Left ventricle myocardium inferior (tissue), 1 donor: ENCODE measurements at regions of chr1 and their contacts with region 1.

Region 1: GRCh38 chr1:29793101-29793546 is 556.8 kb downstream of the PTPRU start:
- DNase-seq: peak; percentile 68
- H3K4me3 ChIP-seq: no peak overlapping the region
- H3K27ac ChIP-seq: no peak overlapping the region
- H3K4me1 ChIP-seq: no peaks in the 10 kb centered on the region
- H3K27me3 ChIP-seq: peaks cover 52% of the 10 kb centered on the region
- CTCF ChIP-seq: peak; percentile 87

Region 2: DNA sequence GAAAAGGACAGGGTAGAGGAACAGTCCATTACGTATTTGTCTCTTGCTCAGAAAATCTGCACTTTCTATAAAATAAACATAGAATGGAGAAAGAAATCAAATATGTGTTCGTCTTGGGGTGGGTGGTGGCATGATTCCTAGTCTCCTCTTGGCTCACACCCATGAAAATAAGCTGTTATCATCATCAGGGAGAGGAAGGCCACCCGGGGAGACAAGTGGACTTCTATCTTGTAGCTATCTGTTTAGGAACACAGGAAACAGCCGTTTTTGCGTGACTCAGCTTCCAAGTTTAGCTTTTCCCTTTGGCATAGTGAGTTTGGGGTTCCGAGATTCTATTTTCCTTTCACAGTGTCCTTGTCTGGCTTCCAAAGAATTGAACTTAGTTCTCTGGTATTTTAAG is 65.5 kb after region 1 on chr1:
- intact Hi-C with region 1: no loop called
- DNase-seq: no peak
- H3K4me3 ChIP-seq: no peak overlapping the region
- H3K27ac ChIP-seq: peak overlapping the region; percentile 24
- H3K4me1 ChIP-seq: peaks cover 35% of the 10 kb centered on the region
- H3K27me3 ChIP-seq: peaks cover 44% of the 10 kb centered on the region
- CTCF ChIP-seq: no peak

Region 3: DNA sequence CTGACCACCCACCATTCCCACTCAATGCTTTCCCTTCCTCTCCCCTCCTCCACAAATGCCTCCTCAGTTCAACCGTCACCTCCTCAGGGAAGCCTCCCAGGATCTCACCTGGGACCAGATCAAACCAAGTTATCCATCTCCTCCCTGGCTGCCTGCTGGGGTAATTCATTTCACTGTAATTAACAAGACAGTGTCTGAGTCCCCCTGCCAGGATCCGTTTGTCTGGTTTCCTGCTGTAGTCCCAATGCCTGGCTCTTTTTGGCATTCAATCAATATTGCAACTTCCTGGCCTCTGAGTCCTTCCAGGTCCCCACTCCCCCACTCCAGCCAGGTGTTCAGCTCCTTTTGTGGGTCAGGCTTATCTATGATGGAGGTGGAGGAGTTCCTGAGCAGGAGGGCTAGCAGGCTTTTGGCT is 130.9 kb after region 1 on chr1:
- intact Hi-C with region 1: no loop called
- DNase-seq: no peak
- H3K4me3 ChIP-seq: no peak overlapping the region
- H3K27ac ChIP-seq: no peak overlapping the region
- H3K4me1 ChIP-seq: no peaks in the 10 kb centered on the region
- H3K27me3 ChIP-seq: peaks cover 51% of the 10 kb centered on the region
- CTCF ChIP-seq: no peak

Region 4: GRCh38 chr1:30085811-30086770 is 293.0 kb after region 1 on chr1:
- intact Hi-C with region 1: loop called (anchors 10 kb)
- DNase-seq: peak; percentile 55
- H3K4me3 ChIP-seq: peak overlapping the region; percentile 28
- H3K27ac ChIP-seq: no peak overlapping the region
- H3K4me1 ChIP-seq: peaks cover 49% of the 10 kb centered on the region
- H3K27me3 ChIP-seq: peaks cover 74% of the 10 kb centered on the region
- CTCF ChIP-seq: peak; percentile 71